Gastrocnemius medialis (tissue), 4 donors: ENCODE measurements at regions of chr3 and their contacts with region 1.

Region 1: DNA sequence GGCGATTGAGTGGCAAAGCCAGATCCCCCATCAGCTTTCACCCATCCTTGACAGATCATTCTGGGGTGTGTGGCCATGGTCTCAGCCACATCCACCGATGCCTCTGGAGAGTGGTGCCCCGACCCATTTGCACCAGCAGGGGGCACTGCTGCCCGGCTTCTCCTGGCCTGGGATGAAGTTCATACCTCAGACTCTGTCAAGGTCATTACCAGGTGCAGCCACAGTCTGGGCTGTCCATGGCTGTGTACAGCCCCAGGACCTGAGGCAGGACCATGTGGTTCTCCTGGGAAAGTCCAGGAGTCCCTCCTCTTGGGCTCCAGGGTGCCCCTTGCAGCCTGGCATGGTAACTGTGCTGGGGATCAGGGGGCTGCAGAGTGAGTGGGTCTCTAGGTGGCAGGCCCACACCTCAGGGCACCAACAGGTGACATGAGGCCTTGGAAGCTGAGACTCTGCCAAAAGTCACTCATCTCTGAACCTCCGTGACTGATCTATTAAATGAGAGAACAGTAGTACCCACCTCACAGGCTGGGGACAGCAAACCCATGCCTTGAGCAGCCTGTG is 67.2 kb downstream of the CACNA2D2 start:
- DNase-seq: peak in 1 of 2 donors; percentile 46
- ATAC-seq: peak; percentile 52 to 82
- H3K4me3 ChIP-seq: no peak overlapping the region
- H3K27ac ChIP-seq: no peak overlapping the region
- H3K4me1 ChIP-seq: no peaks in the 10 kb centered on the region
- H3K27me3 ChIP-seq: no peaks in the 10 kb centered on the region
- CTCF ChIP-seq: peak; percentile 59 to 77 (median 65)
- POLR2A ChIP-seq: no peak

Region 2: DNA sequence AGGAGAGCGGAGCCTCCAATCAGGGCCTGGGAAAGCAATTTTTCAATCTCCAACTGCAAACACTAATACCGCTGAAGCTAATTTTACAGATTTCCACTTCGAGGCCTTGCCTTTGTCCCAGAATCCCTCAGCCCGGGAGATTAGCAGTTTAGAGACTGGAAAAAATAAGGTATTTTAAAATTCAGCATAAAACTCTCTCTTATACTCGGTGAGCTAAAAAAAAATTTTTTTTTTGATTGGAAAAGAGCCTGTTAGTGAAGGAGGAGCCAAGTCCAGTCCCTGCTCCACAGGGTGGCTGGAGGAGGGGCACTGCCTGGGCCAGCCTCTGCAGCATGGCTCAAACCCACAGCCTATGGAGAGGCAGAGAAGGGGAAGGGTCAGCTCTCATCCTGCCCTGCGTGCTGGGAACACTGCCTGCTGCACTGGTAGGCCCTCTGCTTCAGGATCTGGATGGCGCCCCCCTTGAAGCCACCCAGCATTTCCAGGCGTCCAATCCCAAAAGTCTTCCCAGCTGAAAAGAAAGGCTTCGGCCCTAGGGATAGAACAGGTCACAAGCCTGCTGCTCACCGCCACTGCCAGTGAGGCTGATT is 18.4 kb after region 1 on chr3:
- in situ Hi-C with region 1: no loop called
- intact Hi-C with region 1: no loop called
- DNase-seq: no peak
- ATAC-seq: no peak
- H3K4me3 ChIP-seq: no peak overlapping the region
- H3K27ac ChIP-seq: no peak overlapping the region
- H3K4me1 ChIP-seq: no peaks in the 10 kb centered on the region
- H3K27me3 ChIP-seq: no peaks in the 10 kb centered on the region
- CTCF ChIP-seq: no peak
- POLR2A ChIP-seq: no peak

Region 3: GRCh38 chr3:50530001-50530970 is 94.1 kb after region 1 on chr3:
- in situ Hi-C with region 1: loop called in 1 of 4 experiments (anchors 10 kb)
- intact Hi-C with region 1: no loop called
- DNase-seq: no peak
- ATAC-seq: no peak
- H3K4me3 ChIP-seq: no peak overlapping the region
- H3K27ac ChIP-seq: no peak overlapping the region
- H3K4me1 ChIP-seq: no peaks in the 10 kb centered on the region
- H3K27me3 ChIP-seq: peaks cover 0 to 2% (median 0%) of the 10 kb centered on the region in 3 donors
- CTCF ChIP-seq: no peak
- POLR2A ChIP-seq: no peak